Naive thymus-derived CD4-positive, alpha-beta T cell (primary cell): ENCODE measurements at regions of chr17 and their contacts with region 1.

Region 1: DNA sequence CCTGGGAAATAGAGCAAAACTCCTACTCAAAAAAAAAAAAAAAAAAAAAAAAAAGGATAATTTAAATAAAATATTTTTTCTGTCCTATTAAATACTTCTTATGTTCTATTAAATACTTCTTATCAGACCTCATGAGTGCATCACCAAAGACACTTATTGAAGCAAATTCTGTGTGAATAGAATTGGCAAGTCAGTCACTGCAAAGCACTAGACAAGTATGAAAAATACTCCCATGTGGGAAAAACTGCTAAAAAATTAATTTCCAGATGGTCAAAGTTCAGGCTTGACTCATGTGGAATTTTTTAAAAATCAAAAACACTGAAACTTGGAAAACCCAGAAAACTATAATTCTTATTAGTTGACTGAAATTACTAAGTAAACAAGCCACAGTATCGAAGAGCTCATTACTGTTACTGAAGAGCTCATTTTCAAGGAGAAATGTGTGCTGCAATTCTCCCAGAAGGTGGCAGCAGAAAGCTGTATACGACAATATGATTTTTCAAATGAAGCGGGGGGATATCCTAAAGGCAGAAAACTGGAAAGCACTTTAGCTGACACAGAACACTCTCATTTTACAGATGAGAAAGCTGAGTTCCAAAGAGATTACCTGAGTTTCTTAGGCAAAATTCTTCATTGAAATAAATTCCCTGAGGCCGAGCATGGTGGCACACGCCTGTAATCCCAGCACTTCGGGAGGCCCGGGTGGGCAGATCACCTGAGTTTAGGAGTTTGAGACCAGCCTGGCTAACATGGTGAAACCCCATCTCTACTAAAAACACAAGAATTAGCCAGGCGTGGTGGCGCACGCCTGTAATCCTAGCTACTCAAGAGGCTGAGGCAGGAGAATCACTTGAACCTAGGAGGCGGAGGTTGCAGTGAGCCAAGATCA is 15.9 kb upstream of the FBXO47 start:
- DNase-seq: peak in 7 of 9 donors; percentile 40 to 76 (median 62)
- ATAC-seq: peak; percentile 70
- H3K4me3 ChIP-seq: no peak overlapping the region
- H3K4me3 Mint-ChIP-seq: no peak overlapping the region
- H3K27ac ChIP-seq: no peak overlapping the region
- H3K27ac Mint-ChIP-seq: peak overlapping the region in 1 of 9 donors; percentile 32
- H3K4me1 ChIP-seq: peaks cover 0 to 6% of the 10 kb centered on the region in 2 donors
- H3K4me1 Mint-ChIP-seq: peaks cover 0 to 6% (median 5%) of the 10 kb centered on the region in 7 donors
- H3K27me3 ChIP-seq: no peaks in the 10 kb centered on the region
- H3K27me3 Mint-ChIP-seq: peaks cover 0 to 12% (median 0%) of the 10 kb centered on the region in 5 donors

Region 2: DNA sequence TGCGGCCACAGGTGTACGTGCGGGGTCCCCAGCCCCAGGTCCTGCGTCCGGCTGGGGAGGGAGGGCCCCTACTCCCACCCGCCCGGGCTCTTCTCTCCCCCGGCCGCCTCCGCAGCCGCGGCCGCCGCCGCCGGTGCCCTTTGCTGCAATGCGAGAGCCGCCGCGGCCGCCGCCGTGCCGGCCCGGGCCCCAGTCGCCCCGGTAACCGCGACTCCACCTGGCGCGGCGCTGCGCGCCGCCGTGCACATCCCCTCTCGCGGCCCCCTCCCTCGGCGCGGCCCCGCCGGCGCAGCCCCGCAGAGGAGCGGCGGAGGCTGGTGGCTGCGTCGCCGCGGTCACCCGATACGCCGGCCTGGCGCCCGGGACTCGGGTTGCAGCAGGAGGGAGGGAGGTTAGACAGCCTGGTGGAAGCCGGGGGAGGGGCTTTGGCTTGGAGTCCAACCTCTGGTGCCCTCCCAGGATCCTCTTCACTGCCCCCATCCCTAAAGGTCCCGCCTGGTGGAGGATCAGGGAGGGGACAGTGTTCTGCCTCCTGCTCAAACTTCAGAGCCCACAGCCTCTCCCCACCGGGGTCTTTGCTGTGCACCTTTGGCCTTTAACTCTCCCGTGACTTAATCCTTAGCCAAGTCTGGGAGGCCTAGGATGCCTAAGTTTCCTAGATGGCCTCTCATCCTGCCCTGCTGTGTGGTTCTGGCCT is 410.3 kb before region 1 on chr17:
- CTCF ChIA-PET with region 1: no interaction called
- POLR2A ChIA-PET with region 1: no interaction called
- intact Hi-C with region 1: no loop called
- DNase-seq: no peak
- ATAC-seq: peak; percentile 58
- H3K4me3 ChIP-seq: no peak overlapping the region
- H3K4me3 Mint-ChIP-seq: peak overlapping the region in 9 of 10 donors; percentile 5 to 80 (median 66)
- H3K27ac ChIP-seq: no peak overlapping the region
- H3K27ac Mint-ChIP-seq: no peak overlapping the region
- H3K4me1 ChIP-seq: no peaks in the 10 kb centered on the region
- H3K4me1 Mint-ChIP-seq: peaks cover 0 to 18% (median 8%) of the 10 kb centered on the region in 7 donors
- H3K27me3 ChIP-seq: peaks cover 20 to 32% of the 10 kb centered on the region in 2 donors
- H3K27me3 Mint-ChIP-seq: peaks cover 84 to 91% (median 87%) of the 10 kb centered on the region in 5 donors

Region 3: GRCh38 chr17:38922538-38923297 is 60.4 kb before region 1 on chr17:
- CTCF ChIA-PET with region 1: interaction called, 12 read pairs
- POLR2A ChIA-PET with region 1: no interaction called
- intact Hi-C with region 1: no loop called
- DNase-seq: peak in 1 of 9 donors; percentile 17
- ATAC-seq: no peak
- H3K4me3 ChIP-seq: no peak overlapping the region
- H3K4me3 Mint-ChIP-seq: no peak overlapping the region
- H3K27ac ChIP-seq: no peak overlapping the region
- H3K27ac Mint-ChIP-seq: peak overlapping the region in 4 of 9 donors; percentile 38 to 93 (median 45)
- H3K4me1 ChIP-seq: peaks cover 12 to 14% of the 10 kb centered on the region in 2 donors
- H3K4me1 Mint-ChIP-seq: peaks cover 29 to 45% (median 31%) of the 10 kb centered on the region in 7 donors
- H3K27me3 ChIP-seq: no peaks in the 10 kb centered on the region
- H3K27me3 Mint-ChIP-seq: no peaks in the 10 kb centered on the region

Region 4: DNA sequence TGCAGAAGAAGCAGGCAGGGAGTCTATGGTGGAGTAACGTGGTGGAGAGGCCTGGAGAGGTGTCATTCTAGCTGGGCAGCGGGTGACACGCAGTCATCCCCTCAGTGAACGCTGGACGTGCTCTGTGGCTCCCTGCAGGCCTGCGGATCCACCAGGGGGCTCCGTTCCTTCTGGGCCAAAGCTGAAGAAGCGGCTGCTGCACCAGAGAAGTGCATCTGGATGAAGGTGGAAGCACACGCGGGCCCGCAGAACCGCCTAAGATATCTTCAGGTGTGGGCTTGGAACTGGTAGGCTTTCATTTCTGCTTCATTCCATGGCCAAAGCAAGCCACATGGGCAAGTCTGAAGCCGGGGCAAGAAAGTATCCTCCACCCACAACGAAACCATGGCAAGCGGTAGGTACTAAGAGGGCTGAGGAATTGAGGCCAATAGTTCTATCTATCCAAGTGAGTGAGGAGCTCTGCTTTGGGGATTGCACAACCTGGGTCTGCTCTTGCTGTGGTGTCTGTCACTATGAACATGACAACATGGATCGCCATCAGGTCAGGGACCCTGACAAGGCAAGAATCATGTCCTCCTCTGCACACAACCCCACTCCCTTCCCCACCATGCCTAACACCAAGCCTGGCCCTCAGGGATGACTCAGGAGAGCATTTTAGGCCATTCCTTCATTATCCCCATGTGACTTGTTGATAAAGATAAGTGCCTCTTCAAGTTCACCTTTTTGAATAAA is 63.0 kb after region 1 on chr17:
- CTCF ChIA-PET with region 1: interaction called, 10 read pairs
- POLR2A ChIA-PET with region 1: no interaction called
- intact Hi-C with region 1: loop called in 1 of 2 experiments (anchors 1 kb)
- DNase-seq: no peak
- ATAC-seq: no peak
- H3K4me3 ChIP-seq: no peak overlapping the region
- H3K4me3 Mint-ChIP-seq: no peak overlapping the region
- H3K27ac ChIP-seq: no peak overlapping the region
- H3K27ac Mint-ChIP-seq: peak overlapping the region in 1 of 9 donors; percentile 74
- H3K4me1 ChIP-seq: no peaks in the 10 kb centered on the region
- H3K4me1 Mint-ChIP-seq: no peaks in the 10 kb centered on the region
- H3K27me3 ChIP-seq: no peaks in the 10 kb centered on the region
- H3K27me3 Mint-ChIP-seq: peaks cover 0 to 9% (median 5%) of the 10 kb centered on the region in 5 donors

Region 5: GRCh38 chr17:39094607-39095308 is 111.7 kb after region 1 on chr17:
- CTCF ChIA-PET with region 1: interaction called, 14 read pairs
- POLR2A ChIA-PET with region 1: interaction called, 12 read pairs
- intact Hi-C with region 1: loop called in 1 of 2 experiments (anchors 1 kb)
- DNase-seq: peak in 7 of 9 donors; percentile 28 to 62 (median 49)
- ATAC-seq: peak; percentile 60
- H3K4me3 ChIP-seq: peak overlapping the region; percentile 20
- H3K4me3 Mint-ChIP-seq: peak overlapping the region; percentile 61 to 92 (median 82)
- H3K27ac ChIP-seq: peak overlapping the region; percentile 64
- H3K27ac Mint-ChIP-seq: peak overlapping the region; percentile 81 to 97 (median 95)
- H3K4me1 ChIP-seq: peaks cover 60 to 88% of the 10 kb centered on the region in 2 donors
- H3K4me1 Mint-ChIP-seq: peaks cover 64 to 95% (median 90%) of the 10 kb centered on the region in 7 donors
- H3K27me3 ChIP-seq: no peaks in the 10 kb centered on the region
- H3K27me3 Mint-ChIP-seq: peaks cover 0 to 3% (median 0%) of the 10 kb centered on the region in 5 donors

Region 6: DNA sequence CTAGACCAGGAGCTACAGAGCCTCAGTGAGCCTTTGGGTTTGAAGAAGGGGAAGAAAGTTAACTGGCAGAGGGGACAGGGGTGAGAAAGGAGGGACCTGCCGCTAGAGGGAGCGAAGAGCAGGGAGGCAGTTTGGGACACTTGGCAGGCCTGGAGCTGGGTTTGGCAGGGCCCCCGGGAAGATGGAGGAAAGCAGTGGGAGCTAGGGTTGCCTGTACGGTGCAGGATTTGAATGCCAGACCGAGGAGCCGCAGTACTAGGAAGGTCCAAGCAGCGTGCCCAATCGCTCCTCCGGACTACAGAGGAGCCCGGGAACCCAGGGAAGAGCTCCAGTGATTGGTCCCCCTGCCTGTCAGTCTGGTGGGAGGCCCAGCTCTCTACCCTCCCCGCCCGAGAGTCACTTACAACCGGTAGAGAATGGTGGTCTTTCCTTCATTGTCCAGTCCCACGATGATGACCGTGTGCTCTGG is 181.6 kb after region 1 on chr17:
- CTCF ChIA-PET with region 1: interaction called, 27 read pairs
- POLR2A ChIA-PET with region 1: interaction called, 3 read pairs
- intact Hi-C with region 1: no loop called
- DNase-seq: peak; percentile 41 to 79 (median 72)
- ATAC-seq: peak; percentile 89
- H3K4me3 ChIP-seq: peak overlapping the region; percentile 81
- H3K4me3 Mint-ChIP-seq: peak overlapping the region; percentile 88 to 98 (median 92)
- H3K27ac ChIP-seq: peak overlapping the region; percentile 51
- H3K27ac Mint-ChIP-seq: peak overlapping the region in 6 of 9 donors; percentile 12 to 71 (median 56)
- H3K4me1 ChIP-seq: peaks cover 8 to 15% of the 10 kb centered on the region in 2 donors
- H3K4me1 Mint-ChIP-seq: peaks cover 22 to 34% (median 29%) of the 10 kb centered on the region in 7 donors
- H3K27me3 ChIP-seq: no peaks in the 10 kb centered on the region
- H3K27me3 Mint-ChIP-seq: peaks cover 0 to 42% (median 22%) of the 10 kb centered on the region in 5 donors

Region 7: GRCh38 chr17:39225959-39226683 is 243.0 kb after region 1 on chr17:
- CTCF ChIA-PET with region 1: no interaction called
- POLR2A ChIA-PET with region 1: no interaction called
- intact Hi-C with region 1: no loop called
- DNase-seq: peak in 1 of 9 donors; percentile 53
- ATAC-seq: peak; percentile 68
- H3K4me3 ChIP-seq: no peak overlapping the region
- H3K4me3 Mint-ChIP-seq: peak overlapping the region; percentile 72 to 90 (median 85)
- H3K27ac ChIP-seq: no peak overlapping the region
- H3K27ac Mint-ChIP-seq: peak overlapping the region in 2 of 9 donors; percentile 61 to 70
- H3K4me1 ChIP-seq: peaks cover 4 to 6% of the 10 kb centered on the region in 2 donors
- H3K4me1 Mint-ChIP-seq: peaks cover 8 to 18% (median 11%) of the 10 kb centered on the region in 7 donors
- H3K27me3 ChIP-seq: peaks cover 0 to 8% of the 10 kb centered on the region in 2 donors
- H3K27me3 Mint-ChIP-seq: peaks cover 35 to 56% (median 44%) of the 10 kb centered on the region in 5 donors

Region 8: DNA sequence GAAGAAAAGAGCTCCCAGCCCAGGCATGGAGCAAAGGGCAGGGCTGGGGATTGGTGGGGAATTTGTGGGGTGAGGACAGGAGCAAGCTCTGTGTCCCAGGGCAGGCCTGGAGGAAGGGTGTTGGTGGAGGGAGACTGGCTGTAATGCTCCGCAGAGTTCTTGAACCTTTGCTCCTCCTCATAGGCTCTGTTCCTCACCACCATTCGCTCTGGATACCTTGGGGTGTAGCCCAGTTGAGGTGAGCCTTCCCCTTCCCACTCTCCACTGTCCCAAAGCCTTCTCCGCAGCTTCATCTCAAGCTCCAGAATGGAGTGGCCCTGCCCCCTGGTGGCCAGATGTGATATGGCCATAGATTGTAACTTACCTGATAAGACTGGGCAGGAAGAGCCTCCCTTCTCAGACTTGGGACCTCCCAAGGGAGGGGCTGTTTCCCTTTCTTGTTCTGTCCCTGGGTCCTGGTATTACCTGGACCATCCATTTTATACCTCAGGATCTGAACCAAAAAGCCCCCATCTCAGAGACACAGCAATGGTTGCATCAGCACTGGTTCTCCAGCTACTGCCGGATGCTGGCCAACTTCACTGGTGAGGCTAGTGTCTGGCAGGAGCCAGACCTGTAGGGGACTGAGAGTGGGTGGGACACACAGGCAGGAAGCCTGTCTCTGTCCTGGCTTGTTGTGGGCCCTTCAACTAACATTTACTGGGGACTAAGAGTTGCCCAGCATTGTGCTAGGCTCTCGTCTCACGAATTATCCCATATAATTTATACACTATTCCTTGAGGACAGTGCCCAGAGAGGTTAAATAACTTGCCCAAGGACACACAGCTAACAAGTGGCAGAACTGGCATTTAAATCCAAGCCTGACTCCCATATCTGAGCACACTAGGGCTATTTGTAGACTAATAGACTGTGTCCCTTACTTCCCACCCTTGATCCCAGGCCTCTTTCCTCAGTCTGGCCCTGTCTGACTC is 261.8 kb after region 1 on chr17:
- CTCF ChIA-PET with region 1: interaction called, 9 read pairs
- POLR2A ChIA-PET with region 1: no interaction called
- intact Hi-C with region 1: loop called (anchors 2 kb)
- DNase-seq: peak; percentile 74 to 85 (median 81)
- ATAC-seq: peak; percentile 96
- H3K4me3 ChIP-seq: no peak overlapping the region
- H3K4me3 Mint-ChIP-seq: peak overlapping the region in 5 of 10 donors; percentile 12 to 61 (median 38)
- H3K27ac ChIP-seq: no peak overlapping the region
- H3K27ac Mint-ChIP-seq: peak overlapping the region in 6 of 9 donors; percentile 5 to 87 (median 66)
- H3K4me1 ChIP-seq: peaks cover 6 to 10% of the 10 kb centered on the region in 2 donors
- H3K4me1 Mint-ChIP-seq: peaks cover 7 to 16% (median 11%) of the 10 kb centered on the region in 7 donors
- H3K27me3 ChIP-seq: no peaks in the 10 kb centered on the region
- H3K27me3 Mint-ChIP-seq: peaks cover 0 to 4% (median 0%) of the 10 kb centered on the region in 5 donors